ENCODE measurements at regions of chr14 and their contacts with region 1.

Region 1: DNA sequence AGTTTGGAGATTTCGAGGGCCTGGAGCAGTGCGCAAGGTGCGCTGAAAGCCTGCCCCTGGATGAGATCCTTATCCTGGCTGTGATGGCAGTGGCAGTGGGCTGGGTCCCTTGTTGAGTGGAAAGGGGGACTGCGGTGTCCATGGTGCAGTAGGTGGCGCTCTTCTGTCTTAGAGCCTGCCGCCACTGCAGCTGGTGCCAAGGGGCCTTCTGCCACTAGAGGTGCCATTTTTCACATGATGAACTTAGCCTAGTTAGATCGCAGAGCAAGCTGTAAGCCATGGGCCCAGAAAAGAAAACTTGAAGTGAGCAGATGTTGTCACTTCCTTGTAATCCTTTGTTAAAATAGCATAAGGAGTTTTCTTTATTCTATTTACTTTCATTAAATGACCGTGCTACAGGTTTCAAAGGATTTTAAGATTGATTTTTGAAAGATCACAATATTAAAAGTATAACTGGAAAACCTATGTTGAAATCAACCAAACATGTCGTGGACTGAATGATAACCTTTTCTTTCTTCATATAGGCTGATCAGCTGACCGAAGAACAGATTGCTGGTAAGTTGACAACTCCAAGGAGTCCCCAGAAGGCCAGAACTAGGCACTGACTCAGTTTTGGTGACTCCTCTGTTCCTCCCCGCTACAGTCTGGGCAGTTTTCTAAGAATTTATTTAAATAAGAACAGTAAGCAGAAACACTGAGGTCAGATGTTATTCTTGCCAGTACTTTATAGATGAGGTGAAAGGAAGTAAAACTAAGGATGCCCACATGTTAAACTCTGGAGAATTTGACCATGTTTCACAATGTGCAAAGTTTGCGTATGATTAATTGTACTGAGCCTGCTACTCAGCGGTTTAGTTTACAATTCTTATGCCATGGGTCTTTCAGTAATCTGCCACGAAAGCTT is 3.0 kb downstream of the CALM1 start:
- DNase-seq: peak; percentile 71 to 93 (median 86)
- ATAC-seq: peak; percentile 47 to 49
- H3K4me3 Mint-ChIP-seq: peak overlapping the region; percentile 90 to 99 (median 98)
- H3K27ac Mint-ChIP-seq: peak overlapping the region; percentile 91 to 100 (median 99)
- H3K4me1 Mint-ChIP-seq: peaks cover 37 to 67% (median 60%) of the 10 kb centered on the region in 4 donors
- H3K27me3 Mint-ChIP-seq: no peaks in the 10 kb centered on the region

Region 2: GRCh38 chr14:90288651-90289355 is 111.0 kb before region 1 on chr14:
- POLR2A ChIA-PET with region 1: no interaction called
- DNase-seq: no peak
- ATAC-seq: no peak
- H3K4me3 Mint-ChIP-seq: no peak overlapping the region
- H3K27ac Mint-ChIP-seq: peak overlapping the region in 1 of 10 donors; percentile 1
- H3K4me1 Mint-ChIP-seq: peaks cover 0 to 5% (median 0%) of the 10 kb centered on the region in 4 donors
- H3K27me3 Mint-ChIP-seq: no peaks in the 10 kb centered on the region

Region 3: GRCh38 chr14:90368946-90369721 is 30.7 kb before region 1 on chr14:
- POLR2A ChIA-PET with region 1: interaction called, 11 read pairs
- DNase-seq: peak in 4 of 10 donors; percentile 5 to 55 (median 47)
- ATAC-seq: peak; percentile 98 to 100
- H3K4me3 Mint-ChIP-seq: no peak overlapping the region
- H3K27ac Mint-ChIP-seq: no peak overlapping the region
- H3K4me1 Mint-ChIP-seq: peaks cover 0 to 8% (median 2%) of the 10 kb centered on the region in 4 donors
- H3K27me3 Mint-ChIP-seq: no peaks in the 10 kb centered on the region

Region 4: GRCh38 chr14:90758028-90758889 is 358.5 kb after region 1 on chr14:
- POLR2A ChIA-PET with region 1: interaction called, 18 read pairs
- DNase-seq: peak; percentile 87 to 98 (median 93)
- ATAC-seq: peak; percentile 91 to 93
- H3K4me3 Mint-ChIP-seq: peak overlapping the region; percentile 73 to 89 (median 84)
- H3K27ac Mint-ChIP-seq: peak overlapping the region; percentile 64 to 93 (median 86)
- H3K4me1 Mint-ChIP-seq: peaks cover 6 to 22% (median 17%) of the 10 kb centered on the region in 4 donors
- H3K27me3 Mint-ChIP-seq: peaks cover 0 to 8% (median 3%) of the 10 kb centered on the region in 5 donors